ENCODE measurements at regions of chr6 and their contacts with region 1.

Region 1: DNA sequence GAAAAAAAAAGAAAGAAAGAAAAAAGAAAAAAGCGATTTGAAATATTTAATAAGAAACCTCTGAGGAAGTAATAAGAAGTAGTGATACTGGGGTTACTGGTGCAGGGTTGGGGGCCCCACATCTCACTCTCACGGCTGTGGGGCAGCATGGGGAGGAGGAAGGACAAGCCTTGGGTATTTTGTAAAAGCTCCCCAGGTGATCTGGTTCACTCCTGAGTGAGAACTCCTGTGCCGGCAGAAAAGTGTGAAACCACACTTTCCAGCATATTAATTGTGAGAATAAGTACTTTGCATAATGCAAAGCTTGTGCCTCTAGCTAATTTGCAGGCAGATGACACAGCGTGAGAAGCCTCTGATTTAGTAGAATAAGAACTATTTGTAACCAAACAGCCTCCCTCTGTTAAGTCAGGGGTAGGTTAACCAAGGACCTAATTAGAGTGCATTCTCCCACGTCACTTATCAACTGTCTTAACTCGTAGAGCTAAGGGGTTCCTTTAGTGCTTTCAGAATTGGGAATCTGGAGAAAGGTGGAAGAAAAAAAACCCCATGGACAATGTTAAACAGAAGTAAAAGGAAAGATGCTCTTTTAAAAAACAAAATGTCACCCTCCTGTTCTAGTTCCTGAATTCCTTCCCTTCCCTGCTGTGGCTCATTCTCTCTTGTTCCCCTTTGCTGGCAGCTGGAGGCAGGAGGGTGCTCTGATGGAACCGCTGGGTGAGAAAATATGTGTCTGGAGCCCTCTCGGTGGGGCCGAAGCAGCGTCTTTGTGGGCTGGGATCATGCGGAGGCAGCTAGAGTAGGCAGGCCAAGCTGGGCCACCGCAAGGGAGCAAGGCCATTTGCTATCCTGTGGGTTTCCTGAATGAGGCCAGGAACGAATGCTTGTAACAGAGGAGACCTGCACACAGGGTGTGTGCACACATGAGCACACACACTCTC is 108.7 kb downstream of the FYN start:
- DNase-seq: peak; percentile 73 to 87 (median 74)
- H3K4me3 ChIP-seq: peak overlapping the region; percentile 12 to 39
- H3K4me3 Mint-ChIP-seq: peak overlapping the region; percentile 74 to 97 (median 82)
- H3K27ac ChIP-seq: peak overlapping the region; percentile 99
- H3K27ac Mint-ChIP-seq: peak overlapping the region; percentile 97 to 100 (median 99)
- H3K4me1 ChIP-seq: peaks cover 96% of the 10 kb centered on the region
- H3K4me1 Mint-ChIP-seq: peaks cover 88 to 100% (median 94%) of the 10 kb centered on the region in 4 donors
- H3K27me3 ChIP-seq: no peaks in the 10 kb centered on the region
- H3K27me3 Mint-ChIP-seq: no peaks in the 10 kb centered on the region

Region 2: GRCh38 chr6:111715321-111715720 is 49.2 kb before region 1 on chr6:
- CTCF ChIA-PET with region 1: interaction called, 9 read pairs
- POLR2A ChIA-PET with region 1: interaction called, 22 read pairs
- intact Hi-C with region 1: loop called (anchors 2 kb)
- DNase-seq: peak; percentile 42 to 76 (median 53)
- H3K4me3 ChIP-seq: no peak overlapping the region
- H3K4me3 Mint-ChIP-seq: peak overlapping the region in 7 of 8 donors; percentile 33 to 83 (median 63)
- H3K27ac ChIP-seq: peak overlapping the region; percentile 47
- H3K27ac Mint-ChIP-seq: peak overlapping the region; percentile 89 to 96 (median 91)
- H3K4me1 ChIP-seq: peaks cover 74% of the 10 kb centered on the region
- H3K4me1 Mint-ChIP-seq: peaks cover 56 to 82% (median 68%) of the 10 kb centered on the region in 4 donors
- H3K27me3 ChIP-seq: no peaks in the 10 kb centered on the region
- H3K27me3 Mint-ChIP-seq: no peaks in the 10 kb centered on the region

Region 3: DNA sequence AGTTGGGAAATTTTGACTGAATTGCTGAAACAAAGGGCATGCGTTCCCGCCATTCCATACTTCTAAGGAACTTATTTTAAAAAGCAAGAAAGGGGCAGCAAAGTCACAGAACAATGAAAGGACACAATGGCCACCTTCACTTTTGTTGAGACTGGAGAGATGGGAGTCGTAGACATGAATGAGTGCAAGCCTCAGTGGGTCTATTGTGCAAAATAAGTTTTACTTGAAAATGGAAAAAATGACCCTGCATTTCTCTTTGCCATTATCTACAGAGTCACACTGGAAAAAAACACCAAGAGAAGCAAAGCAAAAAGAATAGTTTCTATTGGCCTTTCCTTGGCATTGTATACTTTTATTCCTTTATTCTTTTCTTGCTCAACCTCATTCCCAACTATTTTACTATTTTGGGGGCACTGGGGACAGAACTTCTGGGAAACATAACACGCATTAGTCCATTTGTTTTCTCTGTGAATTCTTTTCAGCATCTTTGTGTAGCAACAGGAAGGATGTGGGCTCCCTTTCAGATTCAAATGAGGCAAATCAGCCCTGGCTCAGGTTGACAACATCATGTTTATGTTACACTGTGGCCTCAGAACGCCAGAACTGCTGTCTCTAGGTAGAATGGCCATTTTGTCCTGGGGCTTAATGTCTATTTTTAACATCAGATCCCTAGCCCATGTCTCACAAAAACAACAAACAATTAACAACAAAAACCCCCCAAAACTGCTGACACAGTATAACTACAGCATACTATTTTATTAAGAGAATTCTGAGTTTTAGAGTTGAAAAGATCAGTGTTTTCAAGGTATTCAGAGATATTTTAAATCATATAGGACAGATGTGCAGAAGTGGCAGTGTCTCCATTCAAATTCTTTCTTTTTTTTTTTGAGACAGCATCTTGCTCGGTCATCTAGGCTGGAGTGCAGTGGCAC is 13.5 kb before region 1 on chr6:
- CTCF ChIA-PET with region 1: interaction called, 28 read pairs
- POLR2A ChIA-PET with region 1: interaction called, 201 read pairs
- intact Hi-C with region 1: loop called (anchors 1 kb)
- DNase-seq: peak; percentile 82 to 89 (median 85)
- H3K4me3 ChIP-seq: peak overlapping the region in 1 of 2 donors; percentile 10
- H3K4me3 Mint-ChIP-seq: peak overlapping the region; percentile 58 to 91 (median 79)
- H3K27ac ChIP-seq: peak overlapping the region; percentile 74
- H3K27ac Mint-ChIP-seq: peak overlapping the region; percentile 97 to 100 (median 99)
- H3K4me1 ChIP-seq: peaks cover 100% of the 10 kb centered on the region
- H3K4me1 Mint-ChIP-seq: peaks cover 81 to 98% (median 90%) of the 10 kb centered on the region in 4 donors
- H3K27me3 ChIP-seq: no peaks in the 10 kb centered on the region
- H3K27me3 Mint-ChIP-seq: no peaks in the 10 kb centered on the region

Region 4: GRCh38 chr6:111804627-111805235 is 40.2 kb after region 1 on chr6:
- CTCF ChIA-PET with region 1: interaction called, 9 read pairs
- POLR2A ChIA-PET with region 1: interaction called, 27 read pairs
- intact Hi-C with region 1: loop called (anchors 2 kb)
- DNase-seq: peak; percentile 70 to 90 (median 74)
- H3K4me3 ChIP-seq: peak overlapping the region in 1 of 2 donors; percentile 15
- H3K4me3 Mint-ChIP-seq: peak overlapping the region; percentile 34 to 86 (median 72)
- H3K27ac ChIP-seq: peak overlapping the region; percentile 77
- H3K27ac Mint-ChIP-seq: peak overlapping the region; percentile 94 to 99 (median 96)
- H3K4me1 ChIP-seq: peaks cover 98% of the 10 kb centered on the region
- H3K4me1 Mint-ChIP-seq: peaks cover 64 to 98% (median 84%) of the 10 kb centered on the region in 4 donors
- H3K27me3 ChIP-seq: no peaks in the 10 kb centered on the region
- H3K27me3 Mint-ChIP-seq: no peaks in the 10 kb centered on the region

Region 5: DNA sequence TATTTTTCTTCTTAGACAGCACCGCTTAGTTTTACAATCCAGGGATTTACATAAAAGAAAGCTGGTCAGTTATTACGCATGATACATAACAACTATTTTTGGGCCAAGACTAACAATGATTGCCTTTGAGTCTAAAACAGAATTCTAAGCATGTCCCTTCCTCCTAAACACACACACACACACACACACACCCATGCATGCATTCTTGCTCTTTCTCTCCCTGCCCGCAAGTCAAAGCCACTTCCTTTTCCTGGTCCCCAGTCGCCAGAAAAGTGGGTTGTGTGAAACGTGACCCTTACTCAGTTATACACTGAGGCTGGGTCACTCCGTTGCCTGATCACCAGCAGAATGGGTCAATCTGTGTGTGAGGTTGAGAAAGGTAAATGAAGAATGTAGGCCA is 77.3 kb after region 1 on chr6:
- CTCF ChIA-PET with region 1: interaction called, 10 read pairs
- POLR2A ChIA-PET with region 1: interaction called, 53 read pairs
- intact Hi-C with region 1: no loop called
- DNase-seq: peak; percentile 65 to 69 (median 66)
- H3K4me3 ChIP-seq: peak overlapping the region in 1 of 2 donors; percentile 29
- H3K4me3 Mint-ChIP-seq: no peak overlapping the region
- H3K27ac ChIP-seq: peak overlapping the region; percentile 54
- H3K27ac Mint-ChIP-seq: no peak overlapping the region
- H3K4me1 ChIP-seq: peaks cover 100% of the 10 kb centered on the region
- H3K4me1 Mint-ChIP-seq: peaks cover 0 to 60% (median 29%) of the 10 kb centered on the region in 4 donors
- H3K27me3 ChIP-seq: no peaks in the 10 kb centered on the region
- H3K27me3 Mint-ChIP-seq: no peaks in the 10 kb centered on the region

Region 6: GRCh38 chr6:111985202-111985731 is 220.8 kb after region 1 on chr6:
- CTCF ChIA-PET with region 1: no interaction called
- POLR2A ChIA-PET with region 1: interaction called, 10 read pairs
- intact Hi-C with region 1: no loop called
- DNase-seq: peak in 4 of 5 donors; percentile 33 to 70 (median 43)
- H3K4me3 ChIP-seq: no peak overlapping the region
- H3K4me3 Mint-ChIP-seq: peak overlapping the region in 6 of 8 donors; percentile 7 to 74 (median 25)
- H3K27ac ChIP-seq: no peak overlapping the region
- H3K27ac Mint-ChIP-seq: peak overlapping the region; percentile 42 to 89 (median 70)
- H3K4me1 ChIP-seq: peaks cover 70% of the 10 kb centered on the region
- H3K4me1 Mint-ChIP-seq: peaks cover 47 to 85% (median 72%) of the 10 kb centered on the region in 4 donors
- H3K27me3 ChIP-seq: no peaks in the 10 kb centered on the region
- H3K27me3 Mint-ChIP-seq: no peaks in the 10 kb centered on the region

Region 7: DNA sequence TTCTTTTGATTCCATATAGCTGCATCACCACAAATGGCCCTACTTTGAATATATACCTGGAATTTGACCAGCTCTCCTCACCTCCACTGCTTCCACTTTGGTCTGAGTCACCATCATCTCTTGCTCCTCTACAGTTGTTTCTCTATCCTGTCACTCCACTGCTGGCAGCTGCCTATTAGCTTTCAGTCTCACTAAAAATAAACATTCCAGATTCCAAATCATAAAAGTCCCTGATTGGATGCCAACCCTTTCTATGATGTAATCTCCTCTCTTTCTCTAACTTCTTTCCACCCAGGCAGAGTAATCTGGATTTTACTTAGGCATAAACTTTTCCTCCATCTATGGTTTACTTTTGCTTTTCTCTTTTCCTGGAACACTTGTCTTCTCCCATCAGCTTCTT is 631.7 kb after region 1 on chr6:
- CTCF ChIA-PET with region 1: no interaction called
- POLR2A ChIA-PET with region 1: no interaction called
- intact Hi-C with region 1: no loop called
- DNase-seq: no peak
- H3K4me3 ChIP-seq: no peak overlapping the region
- H3K4me3 Mint-ChIP-seq: no peak overlapping the region
- H3K27ac ChIP-seq: no peak overlapping the region
- H3K27ac Mint-ChIP-seq: no peak overlapping the region
- H3K4me1 ChIP-seq: no peaks in the 10 kb centered on the region
- H3K4me1 Mint-ChIP-seq: no peaks in the 10 kb centered on the region
- H3K27me3 ChIP-seq: no peaks in the 10 kb centered on the region
- H3K27me3 Mint-ChIP-seq: peaks cover 0 to 3% of the 10 kb centered on the region in 2 donors

Region 8: DNA sequence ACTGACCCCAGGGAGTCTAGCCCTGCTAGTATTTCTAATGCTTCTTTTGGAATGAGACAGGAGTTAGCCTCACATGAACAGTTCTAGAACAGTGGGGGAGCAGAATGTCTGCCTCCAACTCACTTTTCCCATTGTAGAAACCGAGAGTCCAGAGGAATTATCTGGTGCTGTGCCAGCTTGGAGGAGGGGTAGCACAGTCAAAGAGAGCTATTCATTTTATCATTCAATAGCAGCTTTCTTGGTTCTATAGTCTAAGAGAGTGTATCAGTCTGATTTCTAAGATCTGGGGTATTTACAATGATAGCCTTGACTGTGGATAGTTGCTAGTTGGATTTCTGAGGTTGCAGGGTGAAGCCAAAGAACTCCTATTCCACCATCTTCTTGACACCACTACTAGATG is 1030.8 kb after region 1 on chr6:
- CTCF ChIA-PET with region 1: no interaction called
- POLR2A ChIA-PET with region 1: no interaction called
- intact Hi-C with region 1: no loop called
- DNase-seq: no peak
- H3K4me3 ChIP-seq: no peak overlapping the region
- H3K4me3 Mint-ChIP-seq: no peak overlapping the region
- H3K27ac ChIP-seq: no peak overlapping the region
- H3K27ac Mint-ChIP-seq: no peak overlapping the region
- H3K4me1 ChIP-seq: no peaks in the 10 kb centered on the region
- H3K4me1 Mint-ChIP-seq: no peaks in the 10 kb centered on the region
- H3K27me3 ChIP-seq: no peaks in the 10 kb centered on the region
- H3K27me3 Mint-ChIP-seq: no peaks in the 10 kb centered on the region

Measured in CD4-positive, alpha-beta memory T cell (primary cell).